Spleen (tissue), 13 donors: ENCODE measurements at regions of chr10 and their contacts with region 1.

Region 1: DNA sequence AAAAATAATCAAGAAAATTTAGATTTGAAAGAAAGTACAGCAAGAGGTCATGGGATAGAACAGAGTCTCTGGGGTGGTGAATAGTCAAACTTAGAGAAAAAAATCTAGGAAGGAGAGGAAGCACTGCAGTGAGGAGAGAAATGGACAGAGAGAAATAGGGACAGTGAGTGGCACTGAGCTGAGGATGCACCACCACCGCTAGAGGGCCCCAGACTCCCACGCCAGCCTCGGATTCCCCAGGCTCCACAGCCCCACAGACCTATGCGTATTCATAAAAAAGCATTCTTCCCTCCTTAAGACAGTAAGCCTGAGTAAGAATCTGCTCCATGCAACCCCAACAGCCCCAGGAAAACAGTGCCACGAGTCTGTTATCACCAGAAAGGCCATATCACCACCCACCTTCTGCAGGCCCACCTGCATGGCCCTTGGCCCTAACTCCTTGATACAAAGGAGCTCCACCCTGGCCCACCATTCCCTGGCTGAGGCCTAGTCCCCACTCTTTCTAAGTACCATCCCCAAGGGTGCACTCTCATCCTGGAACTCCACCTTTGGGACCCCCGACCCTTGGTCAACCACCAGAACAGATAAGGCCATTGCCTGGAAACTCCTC is 91.0 kb downstream of the ALOX5 start:
- DNase-seq: peak; percentile 94
- H3K4me3 ChIP-seq: peak overlapping the region in 1 of 8 donors; percentile 15
- H3K27ac ChIP-seq: peak overlapping the region in 4 of 8 donors; percentile 84 to 88 (median 85)
- H3K4me1 ChIP-seq: peaks cover 34 to 86% (median 68%) of the 10 kb centered on the region in 6 donors
- H3K27me3 ChIP-seq: no peaks in the 10 kb centered on the region
- CTCF ChIP-seq: peak; percentile 70 to 95 (median 92)
- POLR2A ChIP-seq: no peak

Region 2: GRCh38 chr10:44316187-44316921 is 1148.7 kb before region 1 on chr10:
- intact Hi-C with region 1: no loop called
- DNase-seq: no peak
- H3K4me3 ChIP-seq: no peak overlapping the region
- H3K27ac ChIP-seq: no peak overlapping the region
- H3K4me1 ChIP-seq: peaks cover 0 to 11% (median 2%) of the 10 kb centered on the region in 6 donors
- H3K27me3 ChIP-seq: peaks cover 0 to 23% (median 0%) of the 10 kb centered on the region in 7 donors
- CTCF ChIP-seq: no peak
- POLR2A ChIP-seq: no peak

Region 3: DNA sequence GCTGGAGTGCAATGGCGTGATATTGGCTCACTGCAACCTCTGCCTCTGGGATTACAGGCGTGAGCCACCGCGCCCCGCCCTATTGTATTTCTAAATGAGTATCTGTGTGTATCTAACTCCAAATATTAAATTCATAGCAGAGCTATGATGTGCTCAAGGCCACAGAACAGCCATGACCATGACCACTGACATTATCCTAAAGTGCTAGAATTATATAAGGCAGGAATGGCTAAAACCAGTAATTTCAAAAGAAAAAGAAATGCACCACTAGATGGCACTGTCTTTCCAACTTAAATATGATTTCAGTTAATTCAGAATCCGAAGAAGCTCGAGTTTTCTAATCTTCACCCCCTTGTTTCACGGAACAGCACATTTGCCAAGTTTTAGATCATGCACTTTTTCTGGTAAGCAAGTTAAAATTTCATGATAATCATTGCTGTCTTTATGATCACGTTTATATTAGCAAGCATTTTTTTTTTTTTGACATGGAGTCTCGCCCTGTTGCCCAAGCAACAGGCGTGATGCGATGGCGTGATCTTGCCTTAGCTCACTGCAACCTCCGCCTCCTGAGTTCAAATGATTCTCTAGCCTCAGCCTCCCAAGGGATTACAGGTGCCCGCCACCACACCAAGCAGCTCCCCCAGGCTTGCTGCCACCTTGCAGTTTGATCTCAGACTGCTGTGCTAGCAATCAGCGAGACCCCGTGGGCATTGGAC is 214.9 kb before region 1 on chr10:
- intact Hi-C with region 1: loop called (anchors 10 kb)
- DNase-seq: peak; percentile 80
- H3K4me3 ChIP-seq: peak overlapping the region in 5 of 8 donors; percentile 2 to 57 (median 27)
- H3K27ac ChIP-seq: peak overlapping the region in 2 of 8 donors; percentile 23 to 37
- H3K4me1 ChIP-seq: peaks cover 0 to 16% (median 10%) of the 10 kb centered on the region in 6 donors
- H3K27me3 ChIP-seq: no peaks in the 10 kb centered on the region
- CTCF ChIP-seq: peak; percentile 32 to 73 (median 64)
- POLR2A ChIP-seq: no peak

Region 4: DNA sequence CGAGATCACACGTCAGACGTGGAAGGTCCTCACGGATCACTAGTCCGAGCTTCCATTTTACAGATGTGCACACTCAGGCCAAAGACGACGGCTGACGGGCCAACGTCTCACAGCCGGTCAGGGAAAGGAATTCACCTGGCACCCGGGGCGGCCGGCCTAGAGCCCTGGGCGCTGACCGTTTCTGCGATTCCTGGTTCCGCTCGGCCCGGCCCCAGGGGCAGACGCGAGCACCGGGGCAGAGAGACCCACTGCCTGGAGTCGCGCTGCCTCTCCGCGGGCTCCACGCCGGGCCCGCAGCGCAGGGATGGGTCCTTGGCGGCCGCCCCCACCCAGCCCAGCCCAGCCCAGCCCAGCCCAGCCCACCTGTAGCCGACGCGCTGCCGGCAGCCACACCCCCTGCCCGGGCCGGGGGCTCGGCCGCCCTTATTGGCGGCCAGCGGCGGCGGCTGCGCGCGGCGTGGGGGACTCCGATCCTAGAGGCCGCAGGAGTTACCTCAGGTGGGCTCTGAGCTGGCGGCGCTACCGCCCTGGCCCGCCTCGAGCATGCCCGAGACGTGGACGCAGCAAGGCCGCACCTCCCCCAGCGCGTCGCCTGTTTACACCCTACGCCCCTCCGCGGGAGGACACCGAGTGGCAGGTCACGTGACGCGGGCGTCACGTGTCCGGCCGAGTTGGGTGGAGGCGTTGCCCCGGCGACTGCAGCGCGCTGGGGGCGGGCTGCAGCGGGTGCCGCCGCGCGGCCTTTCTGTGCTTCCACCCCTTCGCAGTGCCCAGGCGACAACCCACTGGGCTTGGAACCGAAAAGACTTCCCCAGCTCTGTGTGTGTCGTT is 129.4 kb after region 1 on chr10:
- intact Hi-C with region 1: loop called (anchors 10 kb)
- DNase-seq: peak; percentile 98
- H3K4me3 ChIP-seq: peak overlapping the region; percentile 77 to 92 (median 86)
- H3K27ac ChIP-seq: peak overlapping the region; percentile 51 to 92 (median 86)
- H3K4me1 ChIP-seq: peaks cover 19 to 41% (median 31%) of the 10 kb centered on the region in 6 donors
- H3K27me3 ChIP-seq: peaks cover 0 to 9% (median 0%) of the 10 kb centered on the region in 7 donors
- CTCF ChIP-seq: peak in 7 of 11 experiments; percentile 6 to 45 (median 19)
- POLR2A ChIP-seq: peak; percentile 29 to 68 (median 31)

Region 5: GRCh38 chr10:45672181-45673073 is 207.4 kb after region 1 on chr10 and contains the start of gene ZFAND4:
- intact Hi-C with region 1: loop called (anchors 10 kb)
- DNase-seq: peak; percentile 99
- H3K4me3 ChIP-seq: peak within 1 kb of the TSS; percentile 55 to 81 (median 68)
- H3K27ac ChIP-seq: peak within 1 kb of the TSS; percentile 87 to 96 (median 94)
- H3K4me1 ChIP-seq: peaks cover 0 to 32% (median 21%) of the 10 kb centered on the region in 6 donors
- H3K27me3 ChIP-seq: no peaks in the 10 kb centered on the region
- CTCF ChIP-seq: peak; percentile 61 to 93 (median 86)
- POLR2A ChIP-seq: peak in 1 of 3 donors; percentile 41
- total RNA-seq, gene ZFAND4: 15.9 to 27.7 (median 19.0) TPM